ENCODE measurements at regions of chr19 and their contacts with region 1.

Region 1: GRCh38 chr19:35135389-35135909 is 590 bp upstream of the LGI4 start:
- DNase-seq: peak; percentile 79
- ATAC-seq: peak; percentile 93
- H3K4me3 ChIP-seq: no peak overlapping the region
- H3K4me3 Mint-ChIP-seq: no peak overlapping the region
- H3K27ac ChIP-seq: no peak overlapping the region
- H3K27ac Mint-ChIP-seq: peak overlapping the region; percentile 75
- H3K4me1 ChIP-seq: peaks cover 0 to 28% of the 10 kb centered on the region in 2 donors
- H3K4me1 Mint-ChIP-seq: peaks cover 21% of the 10 kb centered on the region
- H3K27me3 ChIP-seq: peaks cover 0 to 2% (median 0%) of the 10 kb centered on the region in 4 experiments
- H3K27me3 Mint-ChIP-seq: peaks cover 5% of the 10 kb centered on the region
- CTCF ChIP-seq: peak; percentile 82

Region 2: DNA sequence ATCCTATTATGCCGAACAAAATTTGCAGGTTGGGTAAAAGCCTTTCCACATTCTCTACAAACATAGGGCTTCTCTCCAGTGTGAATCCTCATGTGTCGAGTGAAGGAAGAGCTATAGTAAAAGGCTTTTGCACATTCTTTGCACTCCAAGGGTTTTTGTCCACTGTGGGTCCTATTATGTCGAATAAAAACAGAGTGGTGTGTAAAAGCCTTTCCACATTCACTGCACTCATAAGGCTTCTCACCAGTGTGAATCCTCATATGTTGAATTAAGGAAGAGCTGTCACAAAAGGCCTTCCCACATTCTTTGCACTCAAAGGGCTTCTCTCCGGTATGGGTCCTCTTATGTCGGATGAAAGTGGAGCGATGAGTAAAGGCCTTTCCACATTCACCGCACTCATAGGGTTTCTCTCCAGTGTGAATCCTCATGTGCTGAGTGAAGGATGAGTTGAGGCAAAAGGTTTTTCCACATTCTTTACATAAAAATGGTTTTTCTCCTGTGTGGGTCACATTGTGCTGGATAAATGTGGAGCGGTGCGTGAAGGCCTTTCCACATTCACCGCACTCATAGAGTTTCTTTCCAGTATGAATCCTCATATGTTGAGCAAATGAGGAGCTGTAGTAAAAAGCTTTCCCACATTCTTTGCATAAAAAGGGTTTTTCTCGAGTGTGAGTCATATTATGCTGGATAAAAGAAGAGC is 376.1 kb before region 1 on chr19:
- CTCF ChIA-PET with region 1: no interaction called
- POLR2A ChIA-PET with region 1: no interaction called
- intact Hi-C with region 1: no loop called
- DNase-seq: no peak
- ATAC-seq: no peak
- H3K4me3 ChIP-seq: no peak overlapping the region
- H3K4me3 Mint-ChIP-seq: no peak overlapping the region
- H3K27ac ChIP-seq: no peak overlapping the region
- H3K27ac Mint-ChIP-seq: no peak overlapping the region
- H3K4me1 ChIP-seq: no peaks in the 10 kb centered on the region
- H3K4me1 Mint-ChIP-seq: no peaks in the 10 kb centered on the region
- H3K27me3 ChIP-seq: no peaks in the 10 kb centered on the region
- H3K27me3 Mint-ChIP-seq: no peaks in the 10 kb centered on the region
- CTCF ChIP-seq: no peak

Region 3: GRCh38 chr19:34772697-34773554 is 362.5 kb before region 1 on chr19 and contains the start of gene ZNF599:
- CTCF ChIA-PET with region 1: no interaction called
- POLR2A ChIA-PET with region 1: no interaction called
- intact Hi-C with region 1: no loop called
- DNase-seq: peak; percentile 93
- ATAC-seq: peak; percentile 98
- H3K4me3 ChIP-seq: peak within 1 kb of the TSS; percentile 69 to 79 (median 73)
- H3K4me3 Mint-ChIP-seq: peak within 1 kb of the TSS; percentile 98
- H3K27ac ChIP-seq: peak within 1 kb of the TSS; percentile 50 to 74
- H3K27ac Mint-ChIP-seq: peak within 1 kb of the TSS; percentile 96
- H3K4me1 ChIP-seq: peaks cover 8 to 9% of the 10 kb centered on the region in 2 donors
- H3K4me1 Mint-ChIP-seq: peaks cover 19% of the 10 kb centered on the region
- H3K27me3 ChIP-seq: peaks cover 0 to 9% (median 2%) of the 10 kb centered on the region in 4 experiments
- H3K27me3 Mint-ChIP-seq: peaks cover 25% of the 10 kb centered on the region
- CTCF ChIP-seq: no peak
- total RNA-seq, gene ZNF599: 7.6 and 8.1 TPM in 2 replicates

Region 4: GRCh38 chr19:34888091-34888490 is 247.4 kb before region 1 on chr19:
- CTCF ChIA-PET with region 1: no interaction called
- POLR2A ChIA-PET with region 1: no interaction called
- intact Hi-C with region 1: no loop called
- DNase-seq: no peak
- ATAC-seq: no peak
- H3K4me3 ChIP-seq: no peak overlapping the region
- H3K4me3 Mint-ChIP-seq: no peak overlapping the region
- H3K27ac ChIP-seq: no peak overlapping the region
- H3K27ac Mint-ChIP-seq: no peak overlapping the region
- H3K4me1 ChIP-seq: no peaks in the 10 kb centered on the region
- H3K4me1 Mint-ChIP-seq: no peaks in the 10 kb centered on the region
- H3K27me3 ChIP-seq: no peaks in the 10 kb centered on the region
- H3K27me3 Mint-ChIP-seq: peaks cover 18% of the 10 kb centered on the region
- CTCF ChIP-seq: no peak

Region 5: GRCh38 chr19:35114353-35115176 is 20.9 kb before region 1 on chr19:
- CTCF ChIA-PET with region 1: interaction called, 31 read pairs
- POLR2A ChIA-PET with region 1: no interaction called
- intact Hi-C with region 1: loop called (anchors 1 kb)
- DNase-seq: peak; percentile 80
- ATAC-seq: peak; percentile 92
- H3K4me3 ChIP-seq: peak overlapping the region in 1 of 5 experiments; percentile 24
- H3K4me3 Mint-ChIP-seq: peak overlapping the region; percentile 44
- H3K27ac ChIP-seq: no peak overlapping the region
- H3K27ac Mint-ChIP-seq: peak overlapping the region; percentile 46
- H3K4me1 ChIP-seq: peaks cover 7 to 9% of the 10 kb centered on the region in 2 donors
- H3K4me1 Mint-ChIP-seq: peaks cover 8% of the 10 kb centered on the region
- H3K27me3 ChIP-seq: peaks cover 0 to 26% (median 2%) of the 10 kb centered on the region in 4 experiments
- H3K27me3 Mint-ChIP-seq: peaks cover 7% of the 10 kb centered on the region
- CTCF ChIP-seq: peak; percentile 91

Region 6: DNA sequence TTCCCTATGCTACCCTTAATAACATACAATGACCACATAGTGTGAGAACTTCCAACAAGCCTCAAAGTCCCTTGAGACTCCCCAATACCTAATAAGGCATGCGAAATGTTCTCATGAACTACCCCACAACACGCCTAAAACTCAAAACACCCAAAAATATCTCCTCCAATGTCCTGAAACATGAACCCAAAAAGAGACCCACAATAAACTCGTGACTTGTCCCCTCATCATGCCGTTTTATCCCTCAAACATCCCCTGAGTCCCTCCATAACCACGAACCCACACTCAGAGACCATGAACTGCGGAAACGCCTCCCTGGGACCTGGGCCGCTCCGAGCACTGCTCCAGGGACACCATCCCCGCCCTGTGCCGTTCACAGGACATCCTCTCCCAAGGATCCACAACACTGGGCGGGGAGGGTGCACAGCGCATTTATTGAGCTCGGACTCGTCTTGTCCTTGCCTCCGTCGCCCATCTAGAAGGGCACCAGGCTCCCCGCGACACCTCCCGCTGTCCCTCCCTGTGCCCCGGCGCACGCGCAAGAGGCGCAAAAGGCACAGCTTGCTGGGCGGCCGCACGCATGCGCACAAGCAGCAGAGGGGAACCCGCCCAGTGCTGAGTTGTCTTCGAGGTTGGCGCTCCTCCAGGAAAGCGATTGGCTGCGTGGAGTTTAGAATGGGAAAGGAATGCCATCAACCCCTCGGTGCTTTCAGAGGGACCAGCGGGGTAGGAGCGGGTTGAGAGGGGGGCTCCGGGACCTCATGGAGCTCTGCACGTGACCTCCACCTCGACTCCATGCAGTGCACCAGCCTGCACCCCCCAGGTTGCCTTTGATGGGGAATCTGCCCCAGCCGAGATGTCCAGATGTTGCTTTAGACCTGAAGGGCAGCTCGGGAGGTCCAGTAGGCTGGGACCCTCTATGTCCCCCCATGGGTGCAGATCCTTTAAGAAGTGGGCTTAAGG is 11.1 kb before region 1 on chr19:
- CTCF ChIA-PET with region 1: interaction called, 11 read pairs
- POLR2A ChIA-PET with region 1: interaction called, 3 read pairs
- intact Hi-C with region 1: loop called (anchors 1 kb)
- DNase-seq: peak; percentile 87
- ATAC-seq: peak; percentile 92
- H3K4me3 ChIP-seq: peak overlapping the region; percentile 37 to 72 (median 59)
- H3K4me3 Mint-ChIP-seq: peak overlapping the region; percentile 96
- H3K27ac ChIP-seq: peak overlapping the region; percentile 22 to 34
- H3K27ac Mint-ChIP-seq: peak overlapping the region; percentile 95
- H3K4me1 ChIP-seq: peaks cover 10 to 17% of the 10 kb centered on the region in 2 donors
- H3K4me1 Mint-ChIP-seq: peaks cover 15% of the 10 kb centered on the region
- H3K27me3 ChIP-seq: no peaks in the 10 kb centered on the region
- H3K27me3 Mint-ChIP-seq: no peaks in the 10 kb centered on the region
- CTCF ChIP-seq: no peak

Region 7: DNA sequence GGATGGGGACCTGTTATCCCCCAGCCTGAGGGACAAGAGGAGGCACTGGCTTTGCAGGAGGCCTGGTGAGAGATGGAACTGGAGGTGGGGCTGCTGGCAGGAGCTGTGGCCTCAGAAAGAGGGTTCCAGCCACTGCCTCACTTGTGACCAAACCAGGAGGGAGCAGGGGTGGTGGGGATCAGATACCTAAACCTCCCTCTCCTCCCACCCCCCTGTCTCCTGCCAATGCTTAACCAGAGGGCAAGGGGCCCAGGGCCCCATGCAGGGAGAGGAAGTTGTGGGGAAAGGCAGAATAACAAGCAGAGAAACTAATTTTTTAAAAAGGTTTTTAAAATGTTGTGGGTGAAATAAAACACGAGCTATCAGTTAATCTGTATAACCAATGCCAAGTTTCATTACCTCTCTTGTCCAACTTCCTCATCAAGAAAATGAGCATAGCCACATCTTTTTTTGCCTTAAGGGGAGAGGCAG is 31.8 kb after region 1 on chr19:
- CTCF ChIA-PET with region 1: no interaction called
- POLR2A ChIA-PET with region 1: no interaction called
- intact Hi-C with region 1: no loop called
- DNase-seq: peak; percentile 40
- ATAC-seq: no peak
- H3K4me3 ChIP-seq: no peak overlapping the region
- H3K4me3 Mint-ChIP-seq: peak overlapping the region; percentile 37
- H3K27ac ChIP-seq: peak overlapping the region; percentile 66 to 74
- H3K27ac Mint-ChIP-seq: peak overlapping the region; percentile 92
- H3K4me1 ChIP-seq: peaks cover 21 to 25% of the 10 kb centered on the region in 2 donors
- H3K4me1 Mint-ChIP-seq: peaks cover 35% of the 10 kb centered on the region
- H3K27me3 ChIP-seq: no peaks in the 10 kb centered on the region
- H3K27me3 Mint-ChIP-seq: no peaks in the 10 kb centered on the region
- CTCF ChIP-seq: no peak